ENCODE measurements at regions of chr5 and their contacts with region 1.

Region 1: GRCh38 chr5:76457674-76458485 is 54.8 kb downstream of the IQGAP2 start:
- DNase-seq: peak in 2 of 3 donors; percentile 40 to 59
- H3K4me3 ChIP-seq: no peak overlapping the region
- H3K27ac ChIP-seq: no peak overlapping the region
- H3K4me1 ChIP-seq: peaks cover 12 to 39% (median 30%) of the 10 kb centered on the region in 4 experiments
- H3K27me3 ChIP-seq: no peaks in the 10 kb centered on the region

Region 2: GRCh38 chr5:75460942-75461610 is 996.8 kb before region 1 on chr5:
- CTCF ChIA-PET with region 1: no interaction called
- POLR2A ChIA-PET with region 1: no interaction called
- DNase-seq: no peak
- H3K4me3 ChIP-seq: no peak overlapping the region
- H3K27ac ChIP-seq: no peak overlapping the region
- H3K4me1 ChIP-seq: peaks cover 0 to 5% (median 2%) of the 10 kb centered on the region in 4 experiments
- H3K27me3 ChIP-seq: no peaks in the 10 kb centered on the region

Region 3: DNA sequence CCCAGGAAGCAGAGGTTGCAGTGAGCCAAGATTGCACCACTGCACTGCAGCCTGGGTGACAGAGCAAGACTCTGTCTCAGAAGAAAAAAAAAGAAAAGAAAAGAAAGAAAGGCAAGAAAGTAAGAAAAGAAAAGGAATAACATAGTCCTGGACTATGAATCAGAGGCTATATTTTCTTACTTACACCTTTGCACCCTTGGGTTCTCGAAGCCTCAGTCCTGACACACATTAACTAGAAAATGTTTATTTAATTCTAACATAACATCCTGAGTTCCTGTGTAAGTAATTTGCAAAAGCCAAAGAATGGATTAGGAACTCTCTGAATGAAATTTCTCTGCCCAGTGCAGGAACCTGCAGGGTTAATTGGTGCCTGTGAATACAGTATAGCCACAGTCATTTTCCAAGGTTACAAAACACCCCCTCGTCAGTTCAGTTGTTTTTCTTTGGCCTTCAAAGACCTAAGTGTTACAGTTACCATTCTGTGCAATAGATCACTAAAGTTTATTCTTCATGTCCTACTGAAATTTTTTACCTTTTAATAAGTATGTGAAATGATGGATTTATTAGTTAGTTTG is 227.1 kb before region 1 on chr5:
- CTCF ChIA-PET with region 1: no interaction called
- POLR2A ChIA-PET with region 1: no interaction called
- DNase-seq: no peak
- H3K4me3 ChIP-seq: no peak overlapping the region
- H3K27ac ChIP-seq: no peak overlapping the region
- H3K4me1 ChIP-seq: no peaks in the 10 kb centered on the region
- H3K27me3 ChIP-seq: no peaks in the 10 kb centered on the region

Region 4: DNA sequence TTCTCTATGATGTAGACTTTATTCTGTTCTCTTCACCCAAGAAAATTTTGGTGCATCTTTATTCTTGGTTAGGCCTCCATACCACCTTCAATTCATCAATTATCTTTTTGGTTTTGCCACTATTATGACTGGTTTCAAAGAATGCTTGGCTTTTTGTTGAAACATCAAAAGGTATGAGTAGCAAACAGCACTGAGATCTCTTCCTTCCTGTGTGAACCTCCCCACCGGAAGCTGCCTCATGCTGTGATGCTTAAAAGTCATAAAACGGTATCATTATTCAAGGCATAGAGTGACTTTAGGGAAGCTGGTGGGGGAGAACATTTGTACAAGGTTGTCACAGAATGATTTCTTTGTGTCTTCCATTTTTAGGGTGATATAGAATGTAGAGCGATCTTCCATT is 15.8 kb after region 1 on chr5:
- CTCF ChIA-PET with region 1: interaction called, 15 read pairs
- POLR2A ChIA-PET with region 1: no interaction called
- DNase-seq: peak; percentile 49 to 89 (median 80)
- H3K4me3 ChIP-seq: no peak overlapping the region
- H3K27ac ChIP-seq: no peak overlapping the region
- H3K4me1 ChIP-seq: peaks cover 10 to 45% (median 29%) of the 10 kb centered on the region in 4 experiments
- H3K27me3 ChIP-seq: no peaks in the 10 kb centered on the region

Region 5: DNA sequence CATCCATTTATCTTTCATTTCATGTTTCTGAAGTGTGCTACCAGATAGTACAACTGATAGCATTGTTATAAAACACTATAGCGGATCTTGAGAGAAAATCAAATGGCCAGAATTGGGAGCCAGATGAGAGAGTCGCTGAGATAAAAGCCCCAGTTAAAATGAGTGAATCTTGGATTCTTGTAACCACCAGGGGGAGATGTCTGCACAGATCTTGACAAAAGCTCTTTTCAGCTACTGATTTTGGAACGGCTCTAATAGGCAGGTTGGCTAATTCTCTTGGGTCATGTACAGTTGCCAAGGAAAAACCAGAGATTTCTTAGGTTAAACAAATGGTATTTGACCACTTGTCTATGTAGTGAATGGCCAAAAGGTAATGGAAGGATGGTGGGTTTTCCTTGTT is 143.6 kb after region 1 on chr5:
- CTCF ChIA-PET with region 1: no interaction called
- POLR2A ChIA-PET with region 1: no interaction called
- DNase-seq: peak; percentile 68 to 81 (median 80)
- H3K4me3 ChIP-seq: no peak overlapping the region
- H3K27ac ChIP-seq: no peak overlapping the region
- H3K4me1 ChIP-seq: peaks cover 0 to 2% (median 0%) of the 10 kb centered on the region in 4 experiments
- H3K27me3 ChIP-seq: no peaks in the 10 kb centered on the region